Activated T-helper 2 cell treated with anti-CD3 and anti-CD28 coated beads, Interferon-gamma antibody, Interleukin-2, Interleukin-4, amounts not matched to agents 10 μg/mL and 5 μg/mL and 100 μg/mL, durations not matched to agents 14 hours and 24 hours and 36 hours (primary cell): ENCODE measurements at regions of chr10 and their contacts with region 1.

Region 1: GRCh38 chr10:33098951-33099663 is 141.1 kb upstream of the ITGB1 start:
- DNase-seq: no peak
- H3K4me3 Mint-ChIP-seq: no peak overlapping the region
- H3K27ac Mint-ChIP-seq: peak overlapping the region; percentile 86
- H3K4me1 Mint-ChIP-seq: peaks cover 28% of the 10 kb centered on the region
- H3K27me3 Mint-ChIP-seq: no peaks in the 10 kb centered on the region

Region 2: DNA sequence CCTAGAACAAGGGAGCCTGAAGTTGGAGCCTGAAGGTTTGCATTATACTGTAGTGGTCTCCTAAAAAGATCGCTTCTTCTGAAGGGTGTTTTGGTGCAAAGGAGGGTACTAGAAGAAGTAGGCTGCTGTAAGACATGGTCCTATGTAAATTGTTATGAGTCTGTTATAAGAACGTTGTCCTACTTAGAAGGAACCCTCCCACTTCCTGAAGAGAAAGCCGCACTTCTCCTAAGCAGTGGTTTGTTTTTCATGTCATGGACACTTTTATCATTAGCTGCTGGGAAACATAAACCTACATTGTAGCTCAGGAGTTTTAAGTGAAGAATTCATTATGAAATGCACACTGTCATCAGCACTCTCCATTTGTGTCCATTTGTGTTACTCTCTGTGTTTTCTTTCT is 12.0 kb before region 1 on chr10:
- intact Hi-C with region 1: no loop called
- DNase-seq: no peak
- H3K4me3 Mint-ChIP-seq: no peak overlapping the region
- H3K27ac Mint-ChIP-seq: no peak overlapping the region
- H3K4me1 Mint-ChIP-seq: peaks cover 12% of the 10 kb centered on the region
- H3K27me3 Mint-ChIP-seq: no peaks in the 10 kb centered on the region

Region 3: GRCh38 chr10:33134011-33134751 is 35.1 kb after region 1 on chr10:
- intact Hi-C with region 1: loop called (anchors 1 kb)
- DNase-seq: peak; percentile 64
- H3K4me3 Mint-ChIP-seq: peak overlapping the region; percentile 18
- H3K27ac Mint-ChIP-seq: peak overlapping the region; percentile 84
- H3K4me1 Mint-ChIP-seq: peaks cover 65% of the 10 kb centered on the region
- H3K27me3 Mint-ChIP-seq: no peaks in the 10 kb centered on the region